Ascending aorta (tissue), 2 donors: ENCODE measurements at regions of chr18 and their contacts with region 1.

Region 1: GRCh38 chr18:22556222-22557167 is 138.8 kb upstream of the CTAGE1 start:
- DNase-seq: peak; percentile 68 to 93
- H3K4me3 ChIP-seq: peak overlapping the region; percentile 20 to 41
- H3K27ac ChIP-seq: peak overlapping the region; percentile 81 to 99
- H3K4me1 ChIP-seq: peaks cover 0 to 30% of the 10 kb centered on the region in 2 donors
- H3K27me3 ChIP-seq: no peaks in the 10 kb centered on the region
- CTCF ChIP-seq: no peak

Region 2: DNA sequence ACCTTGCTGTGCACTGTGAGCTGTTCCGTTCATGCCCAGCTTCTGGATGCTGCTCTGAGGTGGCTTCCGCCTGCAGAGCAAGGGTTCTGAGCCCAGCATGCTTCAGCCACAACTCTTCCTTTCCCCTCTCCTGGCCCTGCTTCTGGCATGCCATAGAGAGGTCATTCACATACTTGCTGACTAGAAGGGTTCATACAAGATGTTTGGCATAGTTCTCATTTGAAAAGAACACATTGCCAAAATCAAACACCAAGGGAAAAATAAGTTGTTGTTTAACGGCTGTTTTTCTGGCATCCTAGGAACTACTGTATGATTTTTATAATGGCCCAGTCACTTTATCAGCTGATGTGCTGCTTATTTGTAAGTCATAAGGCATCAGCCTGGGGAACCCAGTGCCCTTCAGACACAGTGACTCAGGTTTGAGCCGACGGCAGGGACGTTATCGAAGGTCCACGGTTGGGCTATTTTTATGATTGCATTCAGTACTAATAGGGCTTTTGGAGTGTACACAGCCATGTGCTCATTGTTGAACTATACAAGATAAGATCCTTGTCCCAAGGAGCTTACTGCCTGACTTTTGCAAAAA is 84.9 kb before region 1 on chr18:
- intact Hi-C with region 1: loop called (anchors 1 kb)
- DNase-seq: peak; percentile 47 to 81
- H3K4me3 ChIP-seq: peak overlapping the region in 1 of 2 donors; percentile 38
- H3K27ac ChIP-seq: peak overlapping the region; percentile 76 to 80
- H3K4me1 ChIP-seq: peaks cover 19 to 25% of the 10 kb centered on the region in 2 donors
- H3K27me3 ChIP-seq: no peaks in the 10 kb centered on the region
- CTCF ChIP-seq: no peak

Region 3: GRCh38 chr18:22503803-22504202 is 52.7 kb before region 1 on chr18:
- intact Hi-C with region 1: no loop called
- DNase-seq: no peak
- H3K4me3 ChIP-seq: no peak overlapping the region
- H3K27ac ChIP-seq: peak overlapping the region in 1 of 2 donors; percentile 40
- H3K4me1 ChIP-seq: no peaks in the 10 kb centered on the region
- H3K27me3 ChIP-seq: no peaks in the 10 kb centered on the region
- CTCF ChIP-seq: no peak